Esophagus muscularis mucosa (tissue), 4 donors: ENCODE measurements at regions of chr17 and their contacts with region 1.

Region 1: GRCh38 chr17:59440784-59441441 is 109.5 kb downstream of the YPEL2 start:
- DNase-seq: peak; percentile 97
- H3K4me3 ChIP-seq: peak overlapping the region in 3 of 4 donors; percentile 15 to 30 (median 15)
- H3K27ac ChIP-seq: peak overlapping the region; percentile 74 to 79 (median 76)
- H3K4me1 ChIP-seq: peaks cover 29 to 43% (median 31%) of the 10 kb centered on the region in 4 donors
- H3K27me3 ChIP-seq: no peaks in the 10 kb centered on the region
- CTCF ChIP-seq: peak; percentile 83 to 94 (median 91)
- EP300 ChIP-seq: no peak
- POLR2A ChIP-seq: no peak

Region 2: DNA sequence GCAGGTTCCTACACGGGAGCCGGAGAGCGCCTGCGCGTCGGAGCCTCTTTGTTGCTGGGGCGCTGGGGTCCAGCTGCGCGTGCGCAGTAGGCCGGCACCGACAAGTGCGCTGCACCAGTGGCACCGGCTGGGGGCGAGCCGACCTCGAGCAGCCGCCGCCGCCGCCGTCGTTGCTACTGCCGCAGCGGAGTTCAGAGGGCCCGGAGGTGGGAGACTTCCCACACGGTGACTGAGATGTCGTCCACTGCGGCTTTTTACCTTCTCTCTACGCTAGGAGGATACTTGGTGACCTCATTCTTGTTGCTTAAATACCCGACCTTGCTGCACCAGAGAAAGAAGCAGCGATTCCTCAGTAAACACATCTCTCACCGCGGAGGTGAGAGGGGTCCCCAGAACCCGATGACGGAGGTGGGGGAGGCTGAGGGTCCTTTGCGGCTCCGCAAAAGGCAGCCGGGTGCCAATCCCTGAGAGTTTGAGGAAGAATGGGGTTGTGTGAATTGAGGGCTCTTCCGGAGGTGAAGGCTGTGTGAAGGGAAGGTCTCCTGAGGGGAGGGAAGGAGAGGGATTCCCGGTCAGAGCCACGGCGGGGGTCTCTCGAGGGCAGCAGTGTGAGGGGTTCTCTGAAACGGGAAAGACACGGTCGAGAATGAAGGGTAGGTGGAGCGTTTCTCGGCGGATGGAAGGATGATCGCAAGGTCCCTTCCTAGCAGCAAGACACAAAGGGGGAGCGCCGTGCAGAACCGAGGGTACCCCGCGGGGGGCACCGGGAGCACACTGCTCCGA is 220.3 kb before region 1 on chr17 and contains the start of gene GDPD1:
- intact Hi-C with region 1: loop called (anchors 5 kb)
- DNase-seq: peak; percentile 97
- H3K4me3 ChIP-seq: peak within 1 kb of the TSS; percentile 67 to 92 (median 69)
- H3K27ac ChIP-seq: peak within 1 kb of the TSS; percentile 72 to 80 (median 78)
- H3K4me1 ChIP-seq: peaks cover 4 to 12% (median 8%) of the 10 kb centered on the region in 4 donors
- H3K27me3 ChIP-seq: no peaks in the 10 kb centered on the region
- CTCF ChIP-seq: peak; percentile 73 to 79 (median 78)
- EP300 ChIP-seq: no peak
- POLR2A ChIP-seq: no peak
- total RNA-seq, gene GDPD1: 0.75 to 2.0 (median 1.00) TPM

Region 3: GRCh38 chr17:59311130-59311920 is 129.6 kb before region 1 on chr17:
- intact Hi-C with region 1: loop called (anchors 1 kb)
- DNase-seq: no peak
- H3K4me3 ChIP-seq: no peak overlapping the region
- H3K27ac ChIP-seq: no peak overlapping the region
- H3K4me1 ChIP-seq: peaks cover 0 to 11% (median 8%) of the 10 kb centered on the region in 4 donors
- H3K27me3 ChIP-seq: no peaks in the 10 kb centered on the region
- CTCF ChIP-seq: peak; percentile 87 to 97 (median 89)
- EP300 ChIP-seq: no peak
- POLR2A ChIP-seq: no peak

Region 4: DNA sequence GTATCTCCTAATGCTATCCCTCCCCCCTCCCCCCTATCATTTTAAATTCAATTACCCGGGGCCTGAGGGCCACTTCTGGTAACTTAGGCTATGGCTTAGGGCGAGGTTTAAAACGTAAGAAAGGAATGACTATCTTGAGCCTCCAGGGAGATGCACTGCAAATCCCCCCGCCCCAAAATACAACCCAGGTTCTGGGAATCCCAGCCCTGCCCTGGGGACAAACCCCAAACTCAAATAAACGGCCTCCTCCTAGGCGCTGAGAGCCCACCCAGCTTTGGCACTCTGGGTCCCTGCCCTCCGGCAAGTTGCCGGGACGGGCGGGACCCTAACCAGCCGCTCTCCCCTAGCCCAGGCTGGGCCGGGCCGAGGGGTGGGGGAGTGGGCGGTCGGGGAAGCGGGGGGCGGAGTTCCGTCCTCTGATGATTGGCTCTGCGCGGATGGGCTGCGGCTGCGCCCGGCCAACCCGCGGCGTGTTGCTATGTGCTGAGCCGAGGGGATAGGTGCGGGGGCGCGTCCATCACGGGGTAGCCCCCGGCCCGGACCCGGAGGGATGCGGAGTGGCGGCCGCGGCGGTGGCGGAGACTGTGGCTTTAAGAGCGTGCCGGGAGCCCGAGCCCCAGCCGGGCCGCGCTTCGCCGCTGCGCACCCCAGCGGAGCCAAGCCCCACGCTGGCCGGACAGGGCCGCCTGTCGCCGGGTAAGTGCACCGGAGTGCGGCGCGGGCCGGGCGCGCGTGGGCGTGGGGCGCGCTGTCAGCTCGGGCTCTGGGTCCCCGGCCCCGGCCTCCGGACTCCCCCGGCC is 109.6 kb before region 1 on chr17 and contains the start of gene YPEL2:
- intact Hi-C with region 1: loop called (anchors 1 kb)
- DNase-seq: peak; percentile 99
- H3K4me3 ChIP-seq: peak within 1 kb of the TSS; percentile 76 to 98 (median 78)
- H3K27ac ChIP-seq: peak within 1 kb of the TSS; percentile 90 to 97 (median 93)
- H3K4me1 ChIP-seq: peaks cover 61 to 72% (median 69%) of the 10 kb centered on the region in 4 donors
- H3K27me3 ChIP-seq: no peaks in the 10 kb centered on the region
- CTCF ChIP-seq: no peak
- EP300 ChIP-seq: no peak
- POLR2A ChIP-seq: peak; percentile 42
- total RNA-seq, gene YPEL2: 27.7 to 62.9 (median 28.8) TPM

Region 5: DNA sequence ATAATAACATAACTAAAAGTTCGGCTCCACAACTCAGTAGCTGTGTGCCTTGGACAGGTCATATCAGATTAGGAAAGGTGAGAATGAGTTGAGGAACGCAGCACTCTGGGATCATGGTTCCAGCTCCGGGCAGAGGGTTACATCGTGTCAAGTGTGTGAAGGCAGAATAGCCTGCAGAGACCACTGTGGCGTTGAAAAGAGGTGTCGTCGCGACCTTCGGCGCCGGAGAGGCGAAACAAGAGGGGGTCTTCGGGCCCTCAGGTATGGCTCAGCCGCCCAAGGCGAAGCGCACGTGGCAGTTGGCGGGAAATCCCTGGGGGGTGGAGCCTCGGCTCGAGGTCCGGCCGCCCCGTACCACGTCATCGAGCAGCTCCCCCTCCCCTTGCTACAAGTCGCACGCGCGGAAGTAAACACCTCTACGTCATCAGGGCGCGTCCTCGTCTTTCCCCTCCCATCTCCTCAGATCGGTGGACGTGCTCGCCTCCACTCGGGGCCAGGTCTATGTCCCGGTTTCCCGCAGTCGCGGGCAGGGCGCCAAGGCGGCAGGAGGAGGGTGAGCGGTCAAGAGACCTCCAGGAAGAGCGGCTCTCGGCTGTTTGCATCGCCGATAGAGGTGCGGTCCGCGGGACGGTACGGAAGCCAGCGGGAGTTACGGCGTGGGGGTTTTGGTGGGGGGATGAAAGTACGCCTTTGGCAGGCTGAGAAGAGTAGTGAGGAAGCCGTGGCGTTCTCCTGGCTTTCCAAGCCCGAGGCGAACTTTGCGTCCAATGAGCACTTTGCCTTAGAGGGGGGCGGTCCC is 124.5 kb after region 1 on chr17 and contains the start of gene DHX40:
- intact Hi-C with region 1: loop called (anchors 10 kb)
- DNase-seq: peak; percentile 98
- H3K4me3 ChIP-seq: peak within 1 kb of the TSS; percentile 77 to 99 (median 94)
- H3K27ac ChIP-seq: peak within 1 kb of the TSS; percentile 84 to 92 (median 90)
- H3K4me1 ChIP-seq: peaks cover 12 to 18% (median 14%) of the 10 kb centered on the region in 4 donors
- H3K27me3 ChIP-seq: no peaks in the 10 kb centered on the region
- CTCF ChIP-seq: no peak
- EP300 ChIP-seq: no peak
- POLR2A ChIP-seq: no peak
- total RNA-seq, gene DHX40: 32.4 to 48.0 (median 44.3) TPM